ENCODE measurements at regions of chr16 and their contacts with region 1.

Region 1: GRCh38 chr16:27455700-27456099 is 53.7 kb downstream of the IL21R start:
- DNase-seq: no peak
- H3K4me3 ChIP-seq: no peak overlapping the region
- H3K27ac ChIP-seq: no peak overlapping the region
- H3K4me1 ChIP-seq: no peaks in the 10 kb centered on the region
- H3K27me3 ChIP-seq: no peaks in the 10 kb centered on the region
- CTCF ChIP-seq: no peak
- POLR2A ChIP-seq: no peak

Region 2: DNA sequence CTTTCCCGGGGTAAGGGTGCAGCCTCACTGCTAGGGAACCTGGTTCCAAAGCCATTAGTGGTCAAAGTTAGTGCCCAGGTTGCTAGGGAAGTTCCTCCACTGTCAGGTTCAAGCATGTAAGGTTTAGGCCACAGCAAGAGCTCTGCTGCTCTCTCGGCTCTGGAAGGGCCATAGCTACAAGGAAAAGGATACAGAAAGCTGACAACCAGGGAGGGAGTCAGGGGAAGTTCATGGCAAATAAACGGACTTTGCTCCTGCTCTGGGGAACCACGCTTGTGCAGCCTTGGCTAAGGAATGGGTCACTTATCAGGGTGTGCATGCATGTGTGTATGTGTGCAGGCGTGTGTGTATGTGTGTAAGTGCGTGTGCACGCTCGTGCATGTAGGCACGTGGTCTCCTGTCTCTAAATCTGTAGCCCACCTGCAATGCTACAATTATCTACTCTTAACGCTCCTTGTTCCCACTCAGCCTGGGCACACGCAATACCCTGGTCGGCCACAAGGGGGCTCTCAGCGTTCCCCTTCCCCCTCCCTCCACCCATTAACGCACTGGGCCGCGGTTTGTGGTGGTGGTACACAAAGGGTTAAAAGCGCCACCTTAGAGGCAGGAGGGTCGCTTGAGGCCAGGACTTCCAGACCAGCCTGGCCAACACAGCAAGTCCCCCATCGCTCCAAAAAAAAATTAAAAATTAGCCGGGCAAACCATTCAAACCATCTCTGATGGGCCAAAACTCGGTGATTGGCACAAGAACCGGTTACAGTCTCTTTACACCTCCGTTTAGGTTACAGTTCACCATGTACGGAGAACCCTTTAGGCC is 300.8 kb before region 1 on chr16:
- intact Hi-C with region 1: loop called (anchors 5 kb)
- DNase-seq: peak; percentile 25
- H3K4me3 ChIP-seq: no peak overlapping the region
- H3K27ac ChIP-seq: no peak overlapping the region
- H3K4me1 ChIP-seq: no peaks in the 10 kb centered on the region
- H3K27me3 ChIP-seq: no peaks in the 10 kb centered on the region
- CTCF ChIP-seq: peak; percentile 83 to 98 (median 94)
- POLR2A ChIP-seq: no peak

Region 3: DNA sequence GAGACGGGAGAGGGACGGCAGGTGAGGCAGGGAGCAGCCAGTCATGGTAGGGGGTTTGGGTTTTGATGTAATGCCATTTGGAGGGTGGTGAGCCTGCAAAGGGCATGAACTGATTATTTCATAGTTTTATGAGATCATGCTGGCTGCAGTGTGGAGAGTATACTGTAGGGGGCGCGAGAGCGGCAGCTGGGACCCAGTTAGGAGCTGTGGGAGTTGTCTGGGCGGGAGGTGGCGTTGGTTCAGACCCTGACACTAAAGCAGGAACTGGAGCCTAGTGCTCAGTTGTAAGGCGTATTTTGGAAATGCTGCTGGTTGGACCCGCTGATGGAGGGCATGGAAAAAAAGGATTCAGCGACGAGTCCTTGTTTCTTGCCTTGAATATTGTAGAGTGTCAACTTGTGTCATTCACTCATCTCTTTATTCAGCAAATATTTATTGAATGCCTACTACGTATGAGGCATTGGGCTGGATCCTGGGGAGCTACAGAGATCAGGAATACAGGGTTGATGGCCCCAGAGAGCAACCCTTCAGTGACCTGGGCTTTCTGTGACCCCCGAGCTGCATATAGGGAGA is 276.1 kb before region 1 on chr16:
- intact Hi-C with region 1: loop called (anchors 5 kb)
- DNase-seq: peak; percentile 57
- H3K4me3 ChIP-seq: no peak overlapping the region
- H3K27ac ChIP-seq: no peak overlapping the region
- H3K4me1 ChIP-seq: no peaks in the 10 kb centered on the region
- H3K27me3 ChIP-seq: no peaks in the 10 kb centered on the region
- CTCF ChIP-seq: peak; percentile 71 to 85 (median 73)
- POLR2A ChIP-seq: no peak

Measured in prostate gland (tissue), 2 donors.